ENCODE measurements at regions of chr1 and their contacts with region 1.

Region 1: GRCh38 chr1:227946624-227947385 is 927 bp downstream of the WNT9A start:
- DNase-seq: peak; percentile 85
- ATAC-seq: peak; percentile 66
- H3K4me3 Mint-ChIP-seq: peak overlapping the region; percentile 82
- H3K27ac Mint-ChIP-seq: no peak overlapping the region
- H3K4me1 Mint-ChIP-seq: peaks cover 9% of the 10 kb centered on the region
- H3K27me3 Mint-ChIP-seq: peaks cover 25% of the 10 kb centered on the region
- CTCF ChIP-seq: peak; percentile 39; the same call in 1 of the 2 replicates

Region 2: GRCh38 chr1:227793948-227794816 is 152.6 kb before region 1 on chr1:
- CTCF ChIA-PET with region 1: interaction called, 25 read pairs
- POLR2A ChIA-PET with region 1: interaction called, 3 read pairs
- DNase-seq: peak; percentile 73
- ATAC-seq: peak; percentile 86
- H3K4me3 Mint-ChIP-seq: no peak overlapping the region
- H3K27ac Mint-ChIP-seq: peak overlapping the region; percentile 63; the same call in 1 of the 2 replicates
- H3K4me1 Mint-ChIP-seq: peaks cover 19% of the 10 kb centered on the region
- H3K27me3 Mint-ChIP-seq: peaks cover 15% of the 10 kb centered on the region
- CTCF ChIP-seq: no peak

Region 3: DNA sequence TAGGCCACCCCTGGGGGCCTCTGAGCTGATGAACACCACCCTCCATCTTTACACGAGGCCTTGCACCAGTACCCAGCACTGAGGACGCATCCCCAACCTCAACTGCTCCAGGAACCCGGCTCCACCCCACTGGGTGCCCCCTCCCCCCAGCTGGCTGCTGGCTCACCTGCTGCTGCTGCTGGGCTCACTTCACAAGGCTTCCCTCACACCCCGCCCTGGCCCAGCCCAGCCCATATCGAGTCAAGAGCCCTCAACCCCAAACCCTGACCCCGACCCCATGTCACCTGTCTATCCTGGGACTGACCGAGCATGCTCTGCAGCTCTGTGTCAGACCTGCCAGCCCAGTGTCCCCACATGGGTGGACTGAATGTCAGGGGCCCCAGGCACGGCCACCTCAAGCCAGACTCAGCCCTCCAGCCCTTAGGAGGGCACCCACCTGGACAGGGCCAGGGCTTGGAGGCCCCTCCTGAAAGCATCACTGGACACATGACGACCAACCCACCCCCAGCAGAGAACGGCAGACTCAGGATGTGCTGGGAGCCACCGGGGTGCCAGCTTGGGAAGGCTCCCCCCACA is 20.5 kb before region 1 on chr1:
- CTCF ChIA-PET with region 1: no interaction called
- POLR2A ChIA-PET with region 1: no interaction called
- DNase-seq: no peak
- ATAC-seq: no peak
- H3K4me3 Mint-ChIP-seq: no peak overlapping the region
- H3K27ac Mint-ChIP-seq: no peak overlapping the region; the same call in 1 of the 2 replicates
- H3K4me1 Mint-ChIP-seq: no peaks in the 10 kb centered on the region
- H3K27me3 Mint-ChIP-seq: no peaks in the 10 kb centered on the region; the same call in 1 of the 2 replicates
- CTCF ChIP-seq: no peak

Region 4: DNA sequence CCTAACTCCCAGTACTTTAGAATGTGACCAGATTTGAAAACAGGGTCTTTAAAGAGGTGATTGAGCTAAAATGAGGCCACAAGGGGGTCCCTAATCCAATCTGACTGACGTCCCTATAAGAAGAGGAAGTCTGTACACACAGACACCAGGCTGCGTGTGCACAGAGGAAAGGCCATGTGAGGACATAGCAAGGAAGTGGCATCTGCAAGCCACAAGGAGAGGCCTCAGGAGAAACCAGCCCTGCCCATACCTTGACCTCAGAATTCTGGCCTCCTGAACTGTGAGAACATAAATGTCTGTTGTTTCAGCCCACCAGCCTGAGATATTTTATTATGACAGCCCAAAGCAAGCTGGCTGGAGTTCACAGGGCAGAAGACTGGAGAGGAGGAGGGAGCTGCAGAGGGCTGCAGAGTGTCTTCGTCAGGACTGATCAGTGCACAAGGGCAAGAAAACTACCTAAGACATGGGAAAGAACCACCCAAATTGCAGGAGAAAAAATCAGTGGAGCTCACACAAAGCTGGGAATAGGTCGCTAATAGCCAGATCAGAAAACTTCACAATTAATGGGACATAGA is 14.9 kb after region 1 on chr1:
- CTCF ChIA-PET with region 1: no interaction called
- POLR2A ChIA-PET with region 1: no interaction called
- DNase-seq: no peak
- ATAC-seq: no peak
- H3K4me3 Mint-ChIP-seq: no peak overlapping the region
- H3K27ac Mint-ChIP-seq: no peak overlapping the region
- H3K4me1 Mint-ChIP-seq: no peaks in the 10 kb centered on the region
- H3K27me3 Mint-ChIP-seq: peaks cover 4% of the 10 kb centered on the region; the same call in 1 of the 2 replicates
- CTCF ChIP-seq: no peak

Measured in WTC11 (cell line).